B cell (primary cell): ENCODE measurements at regions of chr3 and their contacts with region 1.

Region 1: DNA sequence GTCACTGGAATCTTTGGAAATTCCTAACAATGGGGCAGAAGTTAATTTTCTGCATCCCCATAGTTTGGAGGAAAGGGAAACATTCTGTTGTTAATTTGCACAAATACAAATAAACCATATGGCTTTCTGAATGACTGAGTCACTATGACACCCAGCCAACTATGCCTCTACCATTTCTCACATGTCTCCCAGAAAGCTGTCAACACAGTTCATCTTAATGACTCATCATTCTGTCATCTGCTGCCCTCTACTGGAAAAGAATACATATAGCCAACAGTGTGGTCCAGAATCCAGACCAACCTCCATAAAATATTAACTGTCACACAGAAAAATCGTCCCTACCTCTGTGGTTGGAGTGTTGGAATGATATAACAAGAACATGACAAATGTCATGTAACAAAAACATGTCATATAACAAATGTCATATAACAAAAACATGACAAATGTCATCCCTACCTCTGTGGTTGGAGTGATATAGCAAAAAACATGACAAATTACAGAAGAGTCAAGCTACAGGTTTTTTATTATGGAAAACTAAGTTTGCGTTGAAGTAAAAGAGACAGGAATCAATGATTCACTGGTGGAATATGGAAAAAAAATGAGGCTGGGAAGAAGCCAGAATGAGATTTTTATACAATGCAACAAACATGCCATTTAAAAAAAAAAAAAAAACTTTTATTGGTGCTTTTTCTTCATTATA is 47.7 kb upstream of the GYG1 start:
- DNase-seq: peak; percentile 39
- ATAC-seq: peak; percentile 73
- H3K4me3 ChIP-seq: no peak overlapping the region
- H3K4me3 Mint-ChIP-seq: no peak overlapping the region
- H3K27ac ChIP-seq: no peak overlapping the region
- H3K27ac Mint-ChIP-seq: no peak overlapping the region
- H3K4me1 ChIP-seq: no peaks in the 10 kb centered on the region
- H3K4me1 Mint-ChIP-seq: no peaks in the 10 kb centered on the region
- H3K27me3 ChIP-seq: no peaks in the 10 kb centered on the region
- H3K27me3 Mint-ChIP-seq: peaks cover 15% of the 10 kb centered on the region
- CTCF ChIP-seq: peak; percentile 70

Region 2: DNA sequence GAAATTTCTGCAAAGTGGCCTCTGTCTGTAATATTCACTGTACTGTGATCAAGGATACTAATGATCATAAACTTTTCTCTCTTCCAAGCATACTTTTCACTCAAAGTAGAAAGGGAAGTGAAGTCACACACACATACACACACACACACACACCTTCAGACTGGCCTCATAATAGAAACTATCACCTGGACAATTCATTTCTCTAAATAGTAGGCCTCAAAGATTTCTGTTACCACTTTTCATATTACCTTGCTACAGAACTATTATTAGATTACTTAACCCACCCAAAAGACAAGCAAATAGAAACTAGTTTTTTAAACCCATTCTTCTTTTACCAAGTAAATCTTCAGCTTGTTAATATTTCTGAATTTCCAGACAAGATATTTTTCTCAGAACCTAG is 103.9 kb before region 1 on chr3:
- CTCF ChIA-PET with region 1: no interaction called
- POLR2A ChIA-PET with region 1: no interaction called
- intact Hi-C with region 1: no loop called
- DNase-seq: no peak
- ATAC-seq: no peak
- H3K4me3 ChIP-seq: no peak overlapping the region
- H3K4me3 Mint-ChIP-seq: no peak overlapping the region
- H3K27ac ChIP-seq: no peak overlapping the region
- H3K27ac Mint-ChIP-seq: no peak overlapping the region
- H3K4me1 ChIP-seq: no peaks in the 10 kb centered on the region
- H3K4me1 Mint-ChIP-seq: no peaks in the 10 kb centered on the region
- H3K27me3 ChIP-seq: no peaks in the 10 kb centered on the region
- H3K27me3 Mint-ChIP-seq: no peaks in the 10 kb centered on the region
- CTCF ChIP-seq: no peak

Region 3: GRCh38 chr3:148861277-148861869 is 82.3 kb before region 1 on chr3:
- CTCF ChIA-PET with region 1: interaction called, 40 read pairs
- POLR2A ChIA-PET with region 1: no interaction called
- intact Hi-C with region 1: loop called (anchors 1 kb)
- DNase-seq: peak; percentile 37
- ATAC-seq: no peak
- H3K4me3 ChIP-seq: no peak overlapping the region
- H3K4me3 Mint-ChIP-seq: no peak overlapping the region
- H3K27ac ChIP-seq: no peak overlapping the region
- H3K27ac Mint-ChIP-seq: no peak overlapping the region
- H3K4me1 ChIP-seq: no peaks in the 10 kb centered on the region
- H3K4me1 Mint-ChIP-seq: no peaks in the 10 kb centered on the region
- H3K27me3 ChIP-seq: peaks cover 0 to 4% (median 0%) of the 10 kb centered on the region in 4 experiments
- H3K27me3 Mint-ChIP-seq: peaks cover 19% of the 10 kb centered on the region
- CTCF ChIP-seq: peak; percentile 90